Activated CD8-positive, alpha-beta T cell treated with anti-CD3 and anti-CD28 coated beads for 36 hours (primary cell): ENCODE measurements at regions of chr1 and their contacts with region 1.

Region 1: GRCh38 chr1:66242646-66243547 is 291.1 kb upstream of the SGIP1 start:
- DNase-seq: peak; percentile 84
- ATAC-seq: peak; percentile 61
- H3K4me3 Mint-ChIP-seq: no peak overlapping the region
- H3K27ac Mint-ChIP-seq: no peak overlapping the region
- H3K4me1 Mint-ChIP-seq: peaks cover 21% of the 10 kb centered on the region
- H3K27me3 Mint-ChIP-seq: peaks cover 6% of the 10 kb centered on the region
- CTCF ChIP-seq: peak; percentile 99

Region 2: GRCh38 chr1:65952696-65953095 is 290.2 kb before region 1 on chr1:
- CTCF ChIA-PET with region 1: interaction called, 239 read pairs
- POLR2A ChIA-PET with region 1: interaction called, 3 read pairs
- intact Hi-C with region 1: no loop called
- DNase-seq: no peak
- ATAC-seq: peak; percentile 39
- H3K4me3 Mint-ChIP-seq: no peak overlapping the region
- H3K27ac Mint-ChIP-seq: no peak overlapping the region
- H3K4me1 Mint-ChIP-seq: peaks cover 9% of the 10 kb centered on the region
- H3K27me3 Mint-ChIP-seq: peaks cover 1% of the 10 kb centered on the region
- CTCF ChIP-seq: no peak

Region 3: DNA sequence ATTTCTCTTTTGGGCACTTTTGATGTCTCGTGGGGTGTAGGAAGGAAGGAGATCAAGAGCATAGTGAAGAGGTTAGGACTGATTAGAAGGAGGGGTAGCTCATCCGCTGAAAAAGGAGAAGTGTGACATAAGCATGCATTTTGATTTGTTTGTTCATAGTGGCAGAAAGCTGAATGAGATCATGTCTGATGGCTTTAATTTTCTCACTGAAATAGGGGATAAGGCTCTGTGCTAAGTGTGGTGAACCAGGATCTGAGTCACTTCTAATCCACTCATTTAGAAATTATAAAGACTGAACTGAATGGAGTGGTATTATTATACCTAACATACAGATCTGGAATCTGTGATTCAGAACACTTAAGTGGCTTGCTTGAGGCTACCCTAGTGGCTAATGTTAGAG is 105.7 kb before region 1 on chr1:
- CTCF ChIA-PET with region 1: interaction called, 12 read pairs
- POLR2A ChIA-PET with region 1: no interaction called
- intact Hi-C with region 1: no loop called
- DNase-seq: no peak
- ATAC-seq: peak; percentile 86
- H3K4me3 Mint-ChIP-seq: no peak overlapping the region
- H3K27ac Mint-ChIP-seq: no peak overlapping the region
- H3K4me1 Mint-ChIP-seq: peaks cover 2% of the 10 kb centered on the region
- H3K27me3 Mint-ChIP-seq: peaks cover 1% of the 10 kb centered on the region
- CTCF ChIP-seq: no peak

Region 4: GRCh38 chr1:66231217-66231616 is 11.7 kb before region 1 on chr1:
- CTCF ChIA-PET with region 1: interaction called, 47 read pairs
- POLR2A ChIA-PET with region 1: no interaction called
- intact Hi-C with region 1: no loop called
- DNase-seq: no peak
- ATAC-seq: peak; percentile 83
- H3K4me3 Mint-ChIP-seq: no peak overlapping the region
- H3K27ac Mint-ChIP-seq: no peak overlapping the region
- H3K4me1 Mint-ChIP-seq: peaks cover 3% of the 10 kb centered on the region
- H3K27me3 Mint-ChIP-seq: peaks cover 3% of the 10 kb centered on the region
- CTCF ChIP-seq: no peak

Region 5: DNA sequence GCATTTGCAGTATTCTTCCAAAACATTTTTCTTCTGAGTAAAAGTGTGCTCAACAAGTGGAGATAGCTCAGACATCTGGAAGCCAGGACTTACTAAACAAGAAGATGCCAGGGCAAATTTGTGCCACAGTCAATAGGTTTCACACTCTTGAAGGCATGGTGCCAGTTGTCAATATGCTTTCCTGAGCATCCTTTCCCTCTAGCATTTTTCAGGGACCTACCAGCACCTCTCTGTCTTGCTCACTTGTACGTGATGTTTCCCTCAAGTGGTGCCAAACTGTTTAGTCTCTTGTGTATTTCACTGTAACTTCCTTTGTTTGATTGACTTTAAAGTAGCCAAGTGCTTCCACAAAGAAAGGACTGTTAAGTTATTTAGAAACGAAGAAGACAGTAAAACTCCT is 97.0 kb after region 1 on chr1:
- CTCF ChIA-PET with region 1: interaction called, 12 read pairs
- POLR2A ChIA-PET with region 1: interaction called, 4 read pairs
- intact Hi-C with region 1: no loop called
- DNase-seq: no peak
- ATAC-seq: no peak
- H3K4me3 Mint-ChIP-seq: peak overlapping the region; percentile 68
- H3K27ac Mint-ChIP-seq: peak overlapping the region; percentile 89
- H3K4me1 Mint-ChIP-seq: peaks cover 70% of the 10 kb centered on the region
- H3K27me3 Mint-ChIP-seq: no peaks in the 10 kb centered on the region
- CTCF ChIP-seq: no peak

Region 6: DNA sequence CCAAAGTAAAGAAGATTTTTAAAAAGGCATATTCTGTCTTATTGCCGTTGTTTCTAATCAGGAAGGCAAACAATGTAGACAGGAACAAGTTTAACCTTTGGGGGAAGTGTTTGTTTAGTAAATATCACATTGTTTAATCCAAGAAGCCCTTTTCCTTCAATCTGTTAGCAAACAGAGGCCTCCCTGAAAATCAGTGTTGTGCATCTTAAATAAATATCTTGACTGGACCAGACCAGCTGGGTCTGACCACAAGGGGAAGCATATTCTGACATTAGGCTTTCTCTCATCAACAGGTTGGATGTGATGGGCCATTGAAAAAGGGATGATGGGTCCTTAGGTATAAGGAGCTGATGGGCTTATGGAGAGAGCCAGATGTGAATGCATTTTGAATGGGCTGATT is 209.3 kb after region 1 on chr1:
- CTCF ChIA-PET with region 1: interaction called, 512 read pairs
- POLR2A ChIA-PET with region 1: interaction called, 15 read pairs
- intact Hi-C with region 1: no loop called
- DNase-seq: no peak
- ATAC-seq: no peak
- H3K4me3 Mint-ChIP-seq: no peak overlapping the region
- H3K27ac Mint-ChIP-seq: no peak overlapping the region
- H3K4me1 Mint-ChIP-seq: no peaks in the 10 kb centered on the region
- H3K27me3 Mint-ChIP-seq: peaks cover 9% of the 10 kb centered on the region
- CTCF ChIP-seq: no peak